Naive thymus-derived CD4-positive, alpha-beta T cell (primary cell): ENCODE measurements at regions of chr12 and their contacts with region 1.

Region 1: GRCh38 chr12:57899010-57899662 is 42.2 kb upstream of the ATP23 start:
- DNase-seq: peak; percentile 41 to 79 (median 53)
- ATAC-seq: peak; percentile 91
- H3K4me3 ChIP-seq: no peak overlapping the region
- H3K4me3 Mint-ChIP-seq: peak overlapping the region; percentile 53 to 88 (median 82)
- H3K27ac ChIP-seq: peak overlapping the region; percentile 66
- H3K27ac Mint-ChIP-seq: peak overlapping the region; percentile 86 to 98 (median 96)
- H3K4me1 ChIP-seq: peaks cover 34 to 49% of the 10 kb centered on the region in 2 donors
- H3K4me1 Mint-ChIP-seq: peaks cover 29 to 60% (median 55%) of the 10 kb centered on the region in 7 donors
- H3K27me3 ChIP-seq: no peaks in the 10 kb centered on the region
- H3K27me3 Mint-ChIP-seq: peaks cover 0 to 2% (median 0%) of the 10 kb centered on the region in 5 donors

Region 2: DNA sequence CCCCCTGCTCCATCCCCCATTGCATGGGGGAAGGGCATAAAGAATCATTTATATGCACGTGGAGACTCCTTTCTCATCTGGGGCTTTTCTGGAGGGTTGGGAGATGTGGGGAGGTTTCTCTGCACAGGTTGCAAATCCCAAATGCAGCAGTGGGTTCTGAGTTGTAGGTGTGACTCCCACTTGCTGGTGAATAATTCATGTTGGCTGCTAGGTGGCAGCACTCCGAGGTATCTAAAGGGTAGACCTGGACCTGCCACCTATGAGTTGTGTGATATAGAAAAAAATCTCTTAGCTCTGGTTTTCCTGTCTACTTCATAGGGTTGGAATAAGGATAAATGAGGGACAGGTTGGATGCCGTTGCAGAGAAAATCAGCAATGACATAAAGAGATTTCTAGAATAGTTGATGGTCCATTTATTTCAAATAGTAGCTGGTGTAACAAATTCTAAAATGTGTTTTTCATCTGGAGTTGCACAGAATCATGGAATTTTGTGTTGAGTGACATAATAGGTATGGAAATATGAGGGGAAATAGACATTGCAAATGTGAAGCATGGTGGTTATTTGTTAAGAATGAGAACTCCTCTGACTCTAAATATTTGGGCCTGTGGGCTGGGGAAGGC is 139.7 kb before region 1 on chr12:
- CTCF ChIA-PET with region 1: interaction called, 13 read pairs
- POLR2A ChIA-PET with region 1: interaction called, 5 read pairs
- intact Hi-C with region 1: loop called in 1 of 2 experiments (anchors 1 kb)
- DNase-seq: peak in 5 of 9 donors; percentile 47 to 57 (median 51)
- ATAC-seq: peak; percentile 28
- H3K4me3 ChIP-seq: no peak overlapping the region
- H3K4me3 Mint-ChIP-seq: peak overlapping the region in 1 of 10 donors; percentile 64
- H3K27ac ChIP-seq: no peak overlapping the region
- H3K27ac Mint-ChIP-seq: peak overlapping the region in 4 of 9 donors; percentile 16 to 64 (median 28)
- H3K4me1 ChIP-seq: peaks cover 16 to 24% of the 10 kb centered on the region in 2 donors
- H3K4me1 Mint-ChIP-seq: peaks cover 31 to 49% (median 42%) of the 10 kb centered on the region in 7 donors
- H3K27me3 ChIP-seq: peaks cover 0 to 3% of the 10 kb centered on the region in 2 donors
- H3K27me3 Mint-ChIP-seq: peaks cover 2 to 16% (median 9%) of the 10 kb centered on the region in 5 donors

Region 3: GRCh38 chr12:57803319-57803893 is 95.7 kb before region 1 on chr12:
- CTCF ChIA-PET with region 1: interaction called, 53 read pairs
- POLR2A ChIA-PET with region 1: interaction called, 3 read pairs
- intact Hi-C with region 1: loop called in 1 of 2 experiments (anchors 1 kb)
- DNase-seq: peak in 6 of 9 donors; percentile 23 to 46 (median 35)
- ATAC-seq: peak; percentile 60
- H3K4me3 ChIP-seq: no peak overlapping the region
- H3K4me3 Mint-ChIP-seq: no peak overlapping the region
- H3K27ac ChIP-seq: no peak overlapping the region
- H3K27ac Mint-ChIP-seq: peak overlapping the region in 1 of 9 donors; percentile 21
- H3K4me1 ChIP-seq: no peaks in the 10 kb centered on the region
- H3K4me1 Mint-ChIP-seq: peaks cover 0 to 7% (median 0%) of the 10 kb centered on the region in 7 donors
- H3K27me3 ChIP-seq: no peaks in the 10 kb centered on the region
- H3K27me3 Mint-ChIP-seq: no peaks in the 10 kb centered on the region

Region 4: GRCh38 chr12:57836442-57837375 is 62.4 kb before region 1 on chr12:
- CTCF ChIA-PET with region 1: interaction called, 34 read pairs
- POLR2A ChIA-PET with region 1: interaction called, 27 read pairs
- intact Hi-C with region 1: no loop called
- DNase-seq: peak in 6 of 9 donors; percentile 25 to 51 (median 39)
- ATAC-seq: peak; percentile 29
- H3K4me3 ChIP-seq: peak overlapping the region; percentile 53
- H3K4me3 Mint-ChIP-seq: peak overlapping the region; percentile 58 to 97 (median 76)
- H3K27ac ChIP-seq: peak overlapping the region; percentile 89
- H3K27ac Mint-ChIP-seq: peak overlapping the region; percentile 87 to 97 (median 94)
- H3K4me1 ChIP-seq: peaks cover 91 to 95% of the 10 kb centered on the region in 2 donors
- H3K4me1 Mint-ChIP-seq: peaks cover 73 to 99% (median 91%) of the 10 kb centered on the region in 7 donors
- H3K27me3 ChIP-seq: no peaks in the 10 kb centered on the region
- H3K27me3 Mint-ChIP-seq: no peaks in the 10 kb centered on the region

Region 5: DNA sequence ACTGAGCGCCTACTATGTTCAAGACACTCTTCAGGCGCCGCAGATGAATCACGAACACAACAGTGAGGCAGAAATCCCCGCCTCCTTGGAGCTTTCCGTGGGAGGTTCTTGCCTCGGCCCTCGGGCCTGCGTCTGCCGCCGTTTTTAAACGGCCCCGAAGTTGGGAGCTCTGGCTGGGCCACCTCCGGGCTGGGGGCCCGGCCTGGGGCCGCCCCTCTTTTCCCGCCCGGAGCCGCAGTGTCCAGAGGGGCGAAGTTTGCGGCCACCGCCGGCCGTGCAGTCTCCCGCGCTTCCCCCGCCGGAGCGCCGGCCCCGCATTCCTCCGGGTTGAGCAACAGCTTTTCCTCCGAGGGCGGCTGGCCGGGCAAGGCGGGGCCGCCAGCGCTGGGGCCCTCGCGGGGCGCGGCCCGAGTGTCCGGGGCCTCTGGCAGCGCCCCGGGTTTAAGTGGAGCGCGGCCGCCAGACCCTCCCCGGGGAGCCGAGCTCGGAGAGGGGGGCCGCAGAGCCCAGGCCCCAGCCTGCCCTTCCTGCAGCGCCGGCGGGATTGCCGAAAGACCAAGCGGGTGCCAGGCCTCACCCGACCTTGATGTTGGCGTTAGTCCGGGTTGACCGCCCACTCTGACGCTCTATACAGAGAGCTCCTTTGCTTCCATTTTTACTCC is 33.9 kb before region 1 on chr12:
- CTCF ChIA-PET with region 1: interaction called, 9 read pairs
- POLR2A ChIA-PET with region 1: interaction called, 5 read pairs
- intact Hi-C with region 1: loop called in 1 of 2 experiments (anchors 2 kb)
- DNase-seq: peak in 4 of 9 donors; percentile 21 to 68 (median 42)
- ATAC-seq: peak; percentile 83
- H3K4me3 ChIP-seq: peak overlapping the region; percentile 50
- H3K4me3 Mint-ChIP-seq: peak overlapping the region; percentile 77 to 94 (median 85)
- H3K27ac ChIP-seq: no peak overlapping the region
- H3K27ac Mint-ChIP-seq: peak overlapping the region in 5 of 9 donors; percentile 31 to 82 (median 47)
- H3K4me1 ChIP-seq: no peaks in the 10 kb centered on the region
- H3K4me1 Mint-ChIP-seq: peaks cover 4 to 10% (median 9%) of the 10 kb centered on the region in 7 donors
- H3K27me3 ChIP-seq: no peaks in the 10 kb centered on the region
- H3K27me3 Mint-ChIP-seq: peaks cover 11 to 26% (median 20%) of the 10 kb centered on the region in 5 donors

Region 6: DNA sequence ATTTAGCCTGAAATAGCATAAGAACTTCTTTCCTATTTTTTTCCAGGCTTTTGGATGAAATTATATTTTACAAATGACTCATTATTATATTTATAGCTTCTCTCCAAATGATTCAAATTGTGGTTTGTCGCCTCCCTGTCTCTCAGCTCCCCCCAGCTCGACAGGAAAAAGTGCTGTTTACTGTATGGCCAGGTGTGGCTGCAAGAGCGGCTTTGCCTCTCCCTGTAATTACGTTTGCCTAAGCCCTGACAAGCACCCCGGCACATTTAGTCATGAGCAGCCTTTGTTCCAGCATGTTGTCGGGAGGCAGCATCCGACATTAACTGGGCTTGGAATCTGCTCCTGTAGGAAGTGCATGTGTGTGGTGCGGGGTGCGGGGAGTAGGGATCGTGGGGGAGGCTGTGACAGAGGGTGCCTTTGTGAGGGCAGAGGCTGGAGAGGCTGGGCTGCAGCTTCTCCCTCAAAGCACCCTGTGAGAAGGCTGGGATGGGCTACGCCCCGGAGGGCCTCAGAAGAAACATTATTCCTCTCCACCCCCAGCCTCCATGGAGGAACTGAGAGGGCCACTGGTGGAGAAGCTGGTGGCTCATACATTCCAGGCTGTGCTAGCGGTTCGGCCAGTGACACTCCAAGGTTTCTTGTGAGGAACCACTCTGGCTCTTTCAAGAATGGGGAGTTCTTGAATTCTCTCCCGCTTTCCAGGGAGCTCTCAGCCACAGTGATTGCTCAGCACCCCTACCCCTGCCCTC is 10.6 kb before region 1 on chr12:
- CTCF ChIA-PET with region 1: interaction called, 8 read pairs
- POLR2A ChIA-PET with region 1: interaction called, 10 read pairs
- intact Hi-C with region 1: no loop called
- DNase-seq: peak in 4 of 9 donors; percentile 21 to 36 (median 28)
- ATAC-seq: no peak
- H3K4me3 ChIP-seq: no peak overlapping the region
- H3K4me3 Mint-ChIP-seq: peak overlapping the region in 7 of 10 donors; percentile 37 to 77 (median 49)
- H3K27ac ChIP-seq: no peak overlapping the region
- H3K27ac Mint-ChIP-seq: peak overlapping the region in 6 of 9 donors; percentile 11 to 54 (median 44)
- H3K4me1 ChIP-seq: peaks cover 11% of the 10 kb centered on the region in 2 donors
- H3K4me1 Mint-ChIP-seq: peaks cover 8 to 16% (median 9%) of the 10 kb centered on the region in 7 donors
- H3K27me3 ChIP-seq: no peaks in the 10 kb centered on the region
- H3K27me3 Mint-ChIP-seq: peaks cover 0 to 4% (median 0%) of the 10 kb centered on the region in 5 donors

Region 7: GRCh38 chr12:57935839-57936512 is 36.8 kb after region 1 on chr12:
- CTCF ChIA-PET with region 1: no interaction called
- POLR2A ChIA-PET with region 1: no interaction called
- intact Hi-C with region 1: loop called in 1 of 2 experiments (anchors 1 kb)
- DNase-seq: peak; percentile 65 to 95 (median 92)
- ATAC-seq: peak; percentile 96
- H3K4me3 ChIP-seq: peak overlapping the region; percentile 71
- H3K4me3 Mint-ChIP-seq: peak overlapping the region; percentile 84 to 99 (median 98)
- H3K27ac ChIP-seq: peak overlapping the region; percentile 98
- H3K27ac Mint-ChIP-seq: peak overlapping the region; percentile 98 to 100 (median 99)
- H3K4me1 ChIP-seq: peaks cover 21 to 23% of the 10 kb centered on the region in 2 donors
- H3K4me1 Mint-ChIP-seq: peaks cover 21 to 47% (median 34%) of the 10 kb centered on the region in 7 donors
- H3K27me3 ChIP-seq: no peaks in the 10 kb centered on the region
- H3K27me3 Mint-ChIP-seq: peaks cover 0 to 2% (median 0%) of the 10 kb centered on the region in 5 donors

Region 8: GRCh38 chr12:58233886-58234285 is 334.8 kb after region 1 on chr12:
- CTCF ChIA-PET with region 1: no interaction called
- POLR2A ChIA-PET with region 1: no interaction called
- intact Hi-C with region 1: no loop called
- DNase-seq: no peak
- ATAC-seq: no peak
- H3K4me3 ChIP-seq: no peak overlapping the region
- H3K4me3 Mint-ChIP-seq: no peak overlapping the region
- H3K27ac ChIP-seq: no peak overlapping the region
- H3K27ac Mint-ChIP-seq: no peak overlapping the region
- H3K4me1 ChIP-seq: no peaks in the 10 kb centered on the region
- H3K4me1 Mint-ChIP-seq: no peaks in the 10 kb centered on the region
- H3K27me3 ChIP-seq: no peaks in the 10 kb centered on the region
- H3K27me3 Mint-ChIP-seq: peaks cover 0 to 48% (median 25%) of the 10 kb centered on the region in 5 donors

Region 9: DNA sequence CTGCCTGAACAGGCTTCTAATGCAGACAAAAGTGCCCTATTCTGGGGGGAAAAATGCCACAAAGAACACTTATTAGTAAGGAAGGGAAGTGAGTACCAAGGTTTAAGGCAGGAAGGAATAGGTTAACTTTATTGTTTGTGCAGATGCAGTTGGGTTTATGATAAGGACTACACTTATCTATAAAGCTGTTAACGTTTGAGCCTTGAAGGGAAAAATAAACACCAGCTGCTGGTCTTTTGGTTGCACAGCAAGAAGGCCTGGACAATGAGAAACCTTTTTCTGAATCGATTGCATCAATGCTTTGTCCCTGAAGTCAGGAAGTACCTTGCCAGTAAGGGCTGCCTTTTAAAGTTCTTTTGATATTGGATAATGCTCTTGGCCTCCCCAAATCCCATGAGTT is 450.0 kb after region 1 on chr12:
- CTCF ChIA-PET with region 1: no interaction called
- POLR2A ChIA-PET with region 1: no interaction called
- intact Hi-C with region 1: no loop called
- DNase-seq: no peak
- ATAC-seq: no peak
- H3K4me3 ChIP-seq: no peak overlapping the region
- H3K4me3 Mint-ChIP-seq: no peak overlapping the region
- H3K27ac ChIP-seq: no peak overlapping the region
- H3K27ac Mint-ChIP-seq: no peak overlapping the region
- H3K4me1 ChIP-seq: no peaks in the 10 kb centered on the region
- H3K4me1 Mint-ChIP-seq: no peaks in the 10 kb centered on the region
- H3K27me3 ChIP-seq: no peaks in the 10 kb centered on the region
- H3K27me3 Mint-ChIP-seq: peaks cover 17 to 37% (median 19%) of the 10 kb centered on the region in 5 donors